Activated naive CD4-positive, alpha-beta T cell treated with anti-CD3 and anti-CD28 coated beads, Interleukin-2, amount 10 ng/mL, durations not matched to agents 7 days and 5 days (primary cell): ENCODE measurements at regions of chr14 and their contacts with region 1.

Region 1: GRCh38 chr14:37874429-37875191 is 279.2 kb downstream of the TTC6 start:
- DNase-seq: peak; percentile 89
- H3K4me3 Mint-ChIP-seq: no peak overlapping the region
- H3K27ac Mint-ChIP-seq: no peak overlapping the region
- H3K4me1 Mint-ChIP-seq: peaks cover 7% of the 10 kb centered on the region
- H3K27me3 Mint-ChIP-seq: no peaks in the 10 kb centered on the region

Region 2: GRCh38 chr14:37709419-37710195 is 165.0 kb before region 1 on chr14:
- CTCF ChIA-PET with region 1: interaction called, 14 read pairs
- DNase-seq: no peak
- H3K4me3 Mint-ChIP-seq: no peak overlapping the region
- H3K27ac Mint-ChIP-seq: no peak overlapping the region
- H3K4me1 Mint-ChIP-seq: no peaks in the 10 kb centered on the region
- H3K27me3 Mint-ChIP-seq: no peaks in the 10 kb centered on the region